Prostate gland (tissue), 2 donors: ENCODE measurements at regions of chr15 and their contacts with region 1.

Region 1: GRCh38 chr15:74127260-74127953 is 3.0 kb upstream of the ISLR2 start:
- DNase-seq: peak; percentile 84
- H3K4me3 ChIP-seq: peak overlapping the region; percentile 16 to 26
- H3K27ac ChIP-seq: no peak overlapping the region
- H3K4me1 ChIP-seq: peaks cover 7% of the 10 kb centered on the region
- H3K27me3 ChIP-seq: peaks cover 40% of the 10 kb centered on the region
- CTCF ChIP-seq: peak; percentile 95 to 98 (median 96)
- POLR2A ChIP-seq: no peak

Region 2: DNA sequence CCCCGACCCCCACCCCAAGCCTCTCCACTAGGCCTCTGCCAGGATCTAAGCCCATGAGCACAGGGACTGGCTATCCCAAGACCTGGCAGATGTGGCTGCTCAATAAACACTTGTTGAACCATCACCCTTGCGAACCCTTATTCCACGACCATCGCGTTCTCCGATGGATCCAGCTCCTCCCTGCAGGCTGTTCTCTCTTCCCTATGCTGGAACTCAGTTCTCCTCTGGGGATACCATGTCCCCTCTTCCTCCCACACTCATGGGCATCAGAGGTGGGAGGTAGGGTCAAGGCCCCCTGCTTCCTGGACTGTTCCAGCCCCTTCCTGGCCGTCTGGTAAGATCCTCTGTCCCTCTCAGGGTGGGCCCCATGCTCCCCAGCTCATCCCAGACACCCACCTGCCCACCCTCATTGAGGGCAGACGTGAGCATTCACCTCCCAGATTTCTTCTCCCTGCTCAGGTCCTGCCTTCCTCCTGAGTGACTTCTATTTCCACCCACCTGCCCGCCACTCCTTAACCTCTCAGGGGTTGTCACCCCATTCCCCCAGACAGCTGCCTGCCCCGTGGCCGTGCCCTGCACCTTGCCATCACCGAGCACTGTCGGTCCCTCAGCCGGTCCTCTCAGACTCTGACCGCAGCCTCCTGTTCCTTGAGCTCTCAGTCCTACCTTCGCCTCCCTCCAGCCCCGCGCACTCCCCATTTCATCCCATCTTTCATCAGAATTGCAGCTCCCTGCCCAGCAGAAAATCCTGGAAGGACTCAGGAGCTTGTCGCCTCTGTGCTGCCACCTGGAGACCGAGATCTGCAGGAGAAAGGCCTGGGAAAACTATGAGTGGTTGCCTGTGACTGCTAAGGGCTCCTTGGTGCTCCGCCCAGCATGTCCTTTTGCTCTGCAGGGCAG is 90.9 kb before region 1 on chr15:
- intact Hi-C with region 1: no loop called
- DNase-seq: peak; percentile 25
- H3K4me3 ChIP-seq: no peak overlapping the region
- H3K27ac ChIP-seq: no peak overlapping the region
- H3K4me1 ChIP-seq: no peaks in the 10 kb centered on the region
- H3K27me3 ChIP-seq: no peaks in the 10 kb centered on the region
- CTCF ChIP-seq: peak; percentile 23 to 51 (median 50)
- POLR2A ChIP-seq: no peak

Region 3: DNA sequence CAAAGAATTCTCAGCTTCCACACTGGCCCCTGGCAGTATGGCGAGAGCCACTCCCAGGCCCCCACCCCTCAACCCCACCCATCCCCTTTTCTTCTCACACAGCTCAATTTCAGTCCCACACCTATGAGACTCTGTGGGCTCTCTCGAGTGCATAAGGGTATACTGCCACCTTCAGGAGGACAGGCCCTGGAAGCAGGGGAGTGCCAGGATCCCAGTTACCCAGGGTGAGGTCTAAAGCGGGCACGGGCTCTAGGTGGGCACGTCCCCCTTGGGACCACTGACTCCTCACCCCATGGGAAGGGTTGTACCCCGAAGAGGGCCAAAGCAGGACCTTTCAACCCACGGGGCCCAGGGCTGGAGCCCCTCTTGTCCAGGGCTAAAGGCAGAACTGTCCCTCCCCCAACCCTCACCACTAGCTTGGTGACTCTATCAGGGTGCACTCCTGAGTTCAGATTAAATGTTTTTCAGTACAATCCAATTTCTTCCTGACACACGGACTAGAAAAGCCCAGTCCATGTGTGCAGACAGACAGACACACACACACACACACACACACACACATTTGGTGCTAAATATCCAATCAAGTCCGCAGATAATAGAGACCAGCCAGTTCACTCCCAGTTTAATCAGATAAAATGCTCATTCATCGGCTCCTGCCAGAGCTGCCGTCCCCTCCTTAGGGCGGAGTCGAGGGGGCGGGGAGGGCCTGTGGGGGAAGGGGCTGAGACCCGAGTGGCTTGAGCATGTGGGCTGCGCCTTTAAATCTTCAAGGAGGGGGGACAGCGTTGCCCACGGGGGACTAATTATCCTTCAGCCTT is 180.6 kb after region 1 on chr15:
- intact Hi-C with region 1: loop called (anchors 5 kb)
- DNase-seq: peak; percentile 39
- H3K4me3 ChIP-seq: no peak overlapping the region
- H3K27ac ChIP-seq: no peak overlapping the region
- H3K4me1 ChIP-seq: no peaks in the 10 kb centered on the region
- H3K27me3 ChIP-seq: peaks cover 3% of the 10 kb centered on the region
- CTCF ChIP-seq: peak; percentile 33 to 64 (median 59)
- POLR2A ChIP-seq: no peak

Region 4: GRCh38 chr15:74322181-74323076 is 195.0 kb after region 1 on chr15:
- intact Hi-C with region 1: loop called (anchors 2 kb)
- DNase-seq: peak; percentile 40
- H3K4me3 ChIP-seq: no peak overlapping the region
- H3K27ac ChIP-seq: no peak overlapping the region
- H3K4me1 ChIP-seq: no peaks in the 10 kb centered on the region
- H3K27me3 ChIP-seq: no peaks in the 10 kb centered on the region
- CTCF ChIP-seq: peak; percentile 31 to 85 (median 68)
- POLR2A ChIP-seq: no peak